B cell (primary cell): ENCODE measurements at regions of chr6 and their contacts with region 1.

Region 1: GRCh38 chr6:109526905-109527628 is 44.0 kb upstream of the ZBTB24 start:
- DNase-seq: peak; percentile 74
- ATAC-seq: peak; percentile 66
- H3K4me3 ChIP-seq: no peak overlapping the region
- H3K4me3 Mint-ChIP-seq: no peak overlapping the region
- H3K27ac ChIP-seq: no peak overlapping the region
- H3K27ac Mint-ChIP-seq: no peak overlapping the region
- H3K4me1 ChIP-seq: peaks cover 0 to 3% of the 10 kb centered on the region in 2 donors
- H3K4me1 Mint-ChIP-seq: peaks cover 4% of the 10 kb centered on the region
- H3K27me3 ChIP-seq: no peaks in the 10 kb centered on the region
- H3K27me3 Mint-ChIP-seq: no peaks in the 10 kb centered on the region
- CTCF ChIP-seq: peak; percentile 74

Region 2: GRCh38 chr6:110053395-110054240 is 526.6 kb after region 1 on chr6:
- CTCF ChIA-PET with region 1: interaction called, 6 read pairs
- POLR2A ChIA-PET with region 1: no interaction called
- intact Hi-C with region 1: loop called (anchors 1 kb)
- DNase-seq: peak; percentile 53
- ATAC-seq: no peak
- H3K4me3 ChIP-seq: no peak overlapping the region
- H3K4me3 Mint-ChIP-seq: no peak overlapping the region
- H3K27ac ChIP-seq: no peak overlapping the region
- H3K27ac Mint-ChIP-seq: no peak overlapping the region
- H3K4me1 ChIP-seq: peaks cover 0 to 3% of the 10 kb centered on the region in 2 donors
- H3K4me1 Mint-ChIP-seq: no peaks in the 10 kb centered on the region
- H3K27me3 ChIP-seq: no peaks in the 10 kb centered on the region
- H3K27me3 Mint-ChIP-seq: peaks cover 7% of the 10 kb centered on the region
- CTCF ChIP-seq: peak; percentile 57

Region 3: DNA sequence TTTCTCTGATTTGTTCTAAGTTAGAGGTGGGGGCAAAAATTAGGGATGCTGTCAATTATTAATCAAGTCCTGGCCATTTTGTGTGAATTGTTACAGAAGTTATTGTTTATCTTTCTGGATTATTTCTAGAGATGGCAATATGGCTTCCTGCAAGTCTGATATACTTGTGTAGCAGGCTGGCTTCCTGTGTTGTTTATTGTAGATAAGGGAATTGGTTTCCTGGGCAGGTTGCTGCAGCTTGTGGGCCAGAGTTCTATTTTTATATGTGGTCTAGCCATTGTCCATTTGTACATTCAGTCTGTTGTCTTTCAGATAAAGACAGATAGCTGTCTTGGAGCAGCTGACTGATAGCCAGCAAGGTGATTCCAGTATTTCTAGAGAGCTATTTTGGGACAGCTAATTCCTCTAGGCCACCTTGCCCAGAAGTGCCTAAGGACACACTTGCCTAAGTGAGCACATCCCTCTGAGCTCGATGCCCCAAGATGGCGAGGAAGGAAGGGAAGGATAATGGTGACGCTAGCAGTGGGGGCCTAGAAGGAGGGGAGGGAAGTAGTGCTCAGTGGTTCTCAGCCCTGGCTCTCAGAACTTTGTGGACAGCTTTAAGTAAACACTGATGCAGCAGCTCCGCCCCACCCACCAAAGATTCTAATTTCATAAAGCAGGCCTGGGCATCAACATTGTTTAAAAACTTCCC is 862.8 kb after region 1 on chr6:
- CTCF ChIA-PET with region 1: interaction called, 21 read pairs
- POLR2A ChIA-PET with region 1: no interaction called
- intact Hi-C with region 1: no loop called
- DNase-seq: no peak
- ATAC-seq: no peak
- H3K4me3 ChIP-seq: no peak overlapping the region
- H3K4me3 Mint-ChIP-seq: no peak overlapping the region
- H3K27ac ChIP-seq: no peak overlapping the region
- H3K27ac Mint-ChIP-seq: no peak overlapping the region
- H3K4me1 ChIP-seq: no peaks in the 10 kb centered on the region
- H3K4me1 Mint-ChIP-seq: no peaks in the 10 kb centered on the region
- H3K27me3 ChIP-seq: no peaks in the 10 kb centered on the region
- H3K27me3 Mint-ChIP-seq: no peaks in the 10 kb centered on the region
- CTCF ChIP-seq: no peak